ENCODE measurements at regions of chr19 and their contacts with region 1.

Region 1: DNA sequence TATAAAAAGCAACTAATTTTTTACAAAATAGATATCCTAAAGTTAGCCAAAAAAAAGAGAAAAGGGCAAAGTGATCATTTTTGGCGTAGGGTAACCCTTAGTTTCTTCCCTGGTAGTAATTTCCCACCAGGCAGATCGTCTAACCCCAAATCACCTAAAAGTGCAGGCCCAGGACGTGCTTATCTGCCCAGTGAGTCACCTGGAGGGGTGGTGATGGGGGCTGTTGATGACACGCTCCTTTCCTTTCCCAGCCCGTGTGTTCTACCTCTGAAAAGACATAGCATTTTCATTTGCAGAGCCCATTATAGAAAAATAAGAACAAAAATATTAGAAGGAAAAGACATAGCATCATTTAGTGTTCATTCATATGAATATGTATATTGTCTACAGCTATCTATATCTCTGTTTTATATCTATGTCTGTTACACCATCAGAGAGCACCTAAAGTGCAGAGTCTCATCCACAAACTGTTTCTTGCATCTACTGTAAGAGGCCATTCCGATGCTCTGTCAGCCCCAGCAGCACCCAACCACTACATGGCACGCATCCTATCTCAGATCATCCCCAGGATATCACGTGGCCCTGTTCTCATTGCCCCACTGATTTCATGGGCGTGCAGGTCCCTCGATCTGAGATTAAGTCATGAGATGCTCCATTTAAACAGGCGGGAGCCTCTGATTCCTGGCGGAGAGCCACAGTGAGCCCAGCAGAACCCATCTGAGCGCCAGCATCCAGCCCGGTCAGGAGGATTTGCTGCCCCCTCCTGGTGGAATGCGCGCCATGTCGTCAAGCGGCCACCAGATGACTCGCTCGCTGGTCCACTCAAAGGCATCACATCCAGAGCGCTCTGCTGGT is 8.5 kb upstream of the LILRB3 start:
- DNase-seq: peak; percentile 95

Region 2: DNA sequence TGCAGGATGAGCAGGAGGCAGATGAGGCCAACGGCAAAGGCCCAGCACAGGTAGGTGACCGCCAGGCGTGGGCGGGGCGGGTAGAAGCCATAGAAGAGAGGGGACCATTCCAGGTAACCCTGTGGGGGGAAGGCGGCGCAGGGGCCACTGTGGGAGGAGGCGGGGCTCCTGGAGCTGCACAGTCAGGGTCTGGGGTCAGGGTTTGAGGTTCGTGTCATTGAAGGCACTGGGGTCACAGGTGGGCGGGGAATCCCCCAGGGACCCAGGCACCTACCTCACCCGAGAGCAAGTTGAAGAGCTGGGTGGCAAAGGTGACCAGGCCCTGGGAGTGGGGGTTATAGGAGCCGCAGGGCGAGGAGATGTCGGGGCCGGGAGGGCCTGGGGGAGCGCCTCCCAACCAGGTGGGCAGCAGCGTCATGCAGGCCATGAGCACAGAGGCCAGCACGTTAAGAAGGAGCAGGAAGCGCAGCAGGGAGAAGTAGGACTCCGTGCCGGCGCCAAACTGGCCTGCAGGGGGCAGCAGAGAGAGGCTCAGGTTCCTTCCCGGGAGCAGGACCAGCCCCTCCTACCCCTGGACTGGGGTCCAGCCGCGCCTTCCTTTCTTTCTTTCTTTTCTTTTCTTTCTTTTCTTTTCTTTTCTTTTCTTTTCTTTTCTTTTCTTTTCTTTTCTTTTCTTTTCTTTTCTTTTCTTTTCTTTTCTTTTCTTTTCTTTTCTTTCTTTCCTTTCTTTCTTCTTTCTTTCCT is 63.0 kb before region 1 on chr19:
- intact Hi-C with region 1: loop called (anchors 1 kb)
- DNase-seq: peak; percentile 97

Region 3: GRCh38 chr19:54316746-54317107 is 85.4 kb after region 1 on chr19:
- intact Hi-C with region 1: no loop called
- DNase-seq: peak; percentile 88